Caco-2 (cell line): ENCODE measurements at regions of chr11 and their contacts with region 1.

Region 1: GRCh38 chr11:105469931-105470330 is 139.9 kb upstream of the GRIA4 start:
- DNase-seq: peak in 1 of 2 experiments; percentile 33
- H3K4me3 ChIP-seq: no peak overlapping the region
- H3K4me3 Mint-ChIP-seq: no peak overlapping the region
- H3K27ac Mint-ChIP-seq: no peak overlapping the region
- H3K4me1 ChIP-seq: no peaks in the 10 kb centered on the region
- H3K4me1 Mint-ChIP-seq: peaks cover 10% of the 10 kb centered on the region
- H3K27me3 ChIP-seq: no peaks in the 10 kb centered on the region
- H3K27me3 Mint-ChIP-seq: peaks cover 2% of the 10 kb centered on the region
- CTCF ChIP-seq: peak in 1 of 2 experiments; percentile 40

Region 2: DNA sequence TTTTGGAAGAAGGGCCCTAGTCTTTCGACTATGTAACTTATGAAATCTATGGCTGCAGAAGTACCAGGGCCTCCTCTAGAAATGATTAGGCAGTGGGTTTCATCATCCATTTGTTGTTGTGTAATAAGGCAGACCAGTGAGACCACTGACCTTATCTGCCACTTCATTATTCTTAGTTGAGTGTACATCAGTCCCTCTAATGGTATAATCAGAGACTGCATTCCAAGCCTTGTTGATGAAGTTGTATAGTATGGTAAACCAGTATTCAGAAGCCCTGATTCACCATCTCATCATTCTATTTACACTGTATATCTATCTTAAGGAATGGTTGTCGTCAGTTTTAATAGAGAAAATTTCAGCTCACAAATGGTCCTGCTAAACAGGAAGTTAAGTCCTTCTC is 107.7 kb after region 1 on chr11:
- CTCF ChIA-PET with region 1: no interaction called
- POLR2A ChIA-PET with region 1: no interaction called
- intact Hi-C with region 1: loop called (anchors 1 kb)
- DNase-seq: peak in 1 of 2 experiments; percentile 38
- H3K4me3 ChIP-seq: no peak overlapping the region
- H3K4me3 Mint-ChIP-seq: no peak overlapping the region
- H3K27ac Mint-ChIP-seq: no peak overlapping the region
- H3K4me1 ChIP-seq: no peaks in the 10 kb centered on the region
- H3K4me1 Mint-ChIP-seq: no peaks in the 10 kb centered on the region
- H3K27me3 ChIP-seq: no peaks in the 10 kb centered on the region; the same call in 1 of the 2 replicates
- H3K27me3 Mint-ChIP-seq: no peaks in the 10 kb centered on the region
- CTCF ChIP-seq: peak; percentile 42 to 59